ENCODE measurements at regions of chr5 and their contacts with region 1.

Region 1: GRCh38 chr5:119274767-119275130 is 81.1 kb upstream of the TNFAIP8 start:
- DNase-seq: peak in 1 of 5 donors; percentile 84
- H3K4me3 ChIP-seq: peak overlapping the region in 1 of 2 donors; percentile 74
- H3K4me3 Mint-ChIP-seq: peak overlapping the region; percentile 82 to 100 (median 100)
- H3K27ac ChIP-seq: peak overlapping the region; percentile 71
- H3K27ac Mint-ChIP-seq: peak overlapping the region; percentile 90 to 99 (median 96)
- H3K4me1 ChIP-seq: peaks cover 89% of the 10 kb centered on the region
- H3K4me1 Mint-ChIP-seq: peaks cover 76 to 99% (median 85%) of the 10 kb centered on the region in 4 donors
- H3K27me3 ChIP-seq: no peaks in the 10 kb centered on the region
- H3K27me3 Mint-ChIP-seq: peaks cover 0 to 2% of the 10 kb centered on the region in 2 donors

Region 2: DNA sequence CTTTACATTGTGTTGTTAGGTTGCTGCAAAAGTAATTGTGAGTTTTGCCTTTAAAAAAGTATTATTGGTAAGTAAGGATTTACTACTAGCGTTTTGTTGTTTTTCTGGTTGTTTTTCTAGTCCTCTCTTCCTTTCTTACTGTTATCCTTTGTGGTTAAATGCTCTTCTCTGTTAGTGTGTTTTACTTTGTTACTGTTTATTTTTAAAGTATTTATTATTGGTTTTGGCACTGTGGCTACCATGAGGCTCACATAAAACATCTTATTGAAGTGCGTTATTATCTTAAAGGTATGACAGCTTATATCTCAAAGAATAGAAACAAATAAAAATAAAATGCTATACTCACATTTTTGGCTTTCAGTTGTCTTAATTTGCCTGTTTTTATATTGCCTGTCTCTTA is 186.3 kb before region 1 on chr5:
- CTCF ChIA-PET with region 1: no interaction called
- POLR2A ChIA-PET with region 1: no interaction called
- intact Hi-C with region 1: no loop called
- DNase-seq: no peak
- H3K4me3 ChIP-seq: no peak overlapping the region
- H3K4me3 Mint-ChIP-seq: no peak overlapping the region
- H3K27ac ChIP-seq: no peak overlapping the region
- H3K27ac Mint-ChIP-seq: peak overlapping the region in 1 of 7 donors; percentile 71
- H3K4me1 ChIP-seq: no peaks in the 10 kb centered on the region
- H3K4me1 Mint-ChIP-seq: peaks cover 20 to 31% (median 26%) of the 10 kb centered on the region in 4 donors
- H3K27me3 ChIP-seq: no peaks in the 10 kb centered on the region
- H3K27me3 Mint-ChIP-seq: no peaks in the 10 kb centered on the region

Region 3: GRCh38 chr5:119290161-119290569 is 15.4 kb after region 1 on chr5:
- CTCF ChIA-PET with region 1: interaction called, 8 read pairs
- POLR2A ChIA-PET with region 1: interaction called, 79 read pairs
- intact Hi-C with region 1: loop called (anchors 1 kb)
- DNase-seq: no peak
- H3K4me3 ChIP-seq: peak overlapping the region in 1 of 2 donors; percentile 38
- H3K4me3 Mint-ChIP-seq: peak overlapping the region; percentile 71 to 92 (median 84)
- H3K27ac ChIP-seq: peak overlapping the region; percentile 88
- H3K27ac Mint-ChIP-seq: peak overlapping the region; percentile 91 to 99 (median 97)
- H3K4me1 ChIP-seq: peaks cover 82% of the 10 kb centered on the region
- H3K4me1 Mint-ChIP-seq: peaks cover 67 to 93% (median 83%) of the 10 kb centered on the region in 4 donors
- H3K27me3 ChIP-seq: no peaks in the 10 kb centered on the region
- H3K27me3 Mint-ChIP-seq: no peaks in the 10 kb centered on the region

Region 4: DNA sequence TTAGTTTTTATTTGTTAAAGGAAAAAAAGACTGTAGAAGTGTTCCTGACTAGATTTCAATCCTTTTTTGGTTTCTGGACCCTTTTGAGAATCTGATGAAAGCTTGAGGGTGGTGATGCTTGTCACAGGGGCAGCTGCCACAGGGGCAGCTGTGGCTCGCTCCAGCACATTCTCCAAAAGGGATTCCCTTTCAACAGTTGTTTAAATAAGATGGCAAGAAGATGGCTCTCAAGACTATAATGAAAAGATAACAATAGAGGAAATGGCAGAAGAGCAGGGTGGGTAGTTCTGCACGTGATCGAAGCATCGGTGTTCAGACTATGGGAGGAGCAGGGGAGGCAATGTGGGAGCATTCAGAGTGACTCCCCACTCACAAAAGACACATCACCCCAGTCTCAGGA is 34.6 kb after region 1 on chr5:
- CTCF ChIA-PET with region 1: interaction called, 9 read pairs
- POLR2A ChIA-PET with region 1: interaction called, 187 read pairs
- intact Hi-C with region 1: loop called (anchors 1 kb)
- DNase-seq: peak in 1 of 5 donors; percentile 41
- H3K4me3 ChIP-seq: no peak overlapping the region
- H3K4me3 Mint-ChIP-seq: peak overlapping the region; percentile 68 to 93 (median 78)
- H3K27ac ChIP-seq: peak overlapping the region; percentile 52
- H3K27ac Mint-ChIP-seq: peak overlapping the region; percentile 94 to 99 (median 98)
- H3K4me1 ChIP-seq: peaks cover 100% of the 10 kb centered on the region
- H3K4me1 Mint-ChIP-seq: peaks cover 70 to 97% (median 82%) of the 10 kb centered on the region in 4 donors
- H3K27me3 ChIP-seq: no peaks in the 10 kb centered on the region
- H3K27me3 Mint-ChIP-seq: no peaks in the 10 kb centered on the region

Measured in CD4-positive, alpha-beta memory T cell (primary cell).